ENCODE measurements at regions of chr5 and their contacts with region 1.

Region 1: DNA sequence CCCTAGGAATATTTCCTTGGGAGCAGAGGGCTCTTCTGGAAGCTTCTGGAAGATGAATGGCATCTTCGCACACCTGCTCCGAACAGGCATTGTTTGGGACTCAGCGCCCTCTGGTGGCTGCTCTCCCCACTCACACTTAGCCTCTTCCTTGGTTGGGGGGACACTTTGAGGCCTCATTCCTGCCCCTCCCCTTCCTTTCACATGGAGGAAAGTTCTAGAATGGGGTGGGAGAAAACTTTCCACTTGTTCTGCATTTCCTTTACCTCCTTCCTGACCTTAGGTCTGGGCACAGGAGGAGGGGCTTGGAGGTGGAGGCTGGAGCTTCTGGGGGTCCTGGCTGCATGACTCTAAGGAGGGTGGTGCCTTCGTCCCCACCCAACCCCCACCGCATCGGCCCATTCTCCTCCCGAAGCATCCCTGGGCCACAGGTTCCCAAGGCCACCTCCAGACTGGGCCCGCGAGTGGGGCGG is 19.3 kb upstream of the SMIM32 start:
- DNase-seq: no peak
- H3K4me3 ChIP-seq: no peak overlapping the region
- H3K27ac ChIP-seq: no peak overlapping the region
- H3K4me1 ChIP-seq: no peaks in the 10 kb centered on the region
- H3K27me3 ChIP-seq: no peaks in the 10 kb centered on the region
- CTCF ChIP-seq: peak; percentile 84 to 88 (median 86)
- POLR2A ChIP-seq: no peak

Region 2: DNA sequence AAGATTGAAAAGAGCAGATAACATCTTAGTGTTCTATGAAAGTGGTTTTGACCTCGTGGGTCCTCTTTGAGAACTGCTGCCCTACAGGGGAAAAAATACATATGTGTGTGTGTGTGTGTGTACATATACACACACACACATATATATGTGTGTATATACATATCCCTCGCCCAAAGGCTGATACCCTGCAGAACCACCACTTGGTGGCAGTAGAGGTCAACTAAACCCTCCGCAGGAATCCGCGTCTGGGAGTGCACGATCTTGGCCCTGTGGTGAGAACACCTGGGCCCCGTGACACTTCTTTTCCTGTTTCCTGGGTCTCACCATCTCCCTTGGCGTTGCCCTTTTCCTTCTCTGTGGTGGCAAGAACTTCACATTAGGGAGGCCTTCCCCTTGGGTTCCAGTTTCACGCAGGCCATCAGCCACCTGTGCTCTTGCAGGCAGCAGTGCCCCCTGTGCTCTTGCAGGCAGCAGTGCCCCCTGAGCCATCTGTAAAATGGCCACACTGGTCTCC is 324.9 kb before region 1 on chr5:
- intact Hi-C with region 1: loop called (anchors 5 kb)
- DNase-seq: no peak
- H3K4me3 ChIP-seq: no peak overlapping the region
- H3K27ac ChIP-seq: no peak overlapping the region
- H3K4me1 ChIP-seq: peaks cover 7% of the 10 kb centered on the region
- H3K27me3 ChIP-seq: no peaks in the 10 kb centered on the region
- CTCF ChIP-seq: peak; percentile 45 to 81 (median 81)
- POLR2A ChIP-seq: no peak